ENCODE measurements at regions of chr3 and their contacts with region 1.

Region 1: GRCh38 chr3:190384241-190384863 is 3.6 kb upstream of the CLDN16 start:
- DNase-seq: peak; percentile 19
- ATAC-seq: peak; percentile 94
- H3K4me3 ChIP-seq: no peak overlapping the region
- H3K27ac ChIP-seq: no peak overlapping the region
- H3K4me1 ChIP-seq: no peaks in the 10 kb centered on the region
- H3K27me3 ChIP-seq: no peaks in the 10 kb centered on the region
- CTCF ChIP-seq: peak; percentile 49 to 68 (median 59); a peak in 5 of 6 replicates
- EP300 ChIP-seq: no peak
- POLR2A ChIP-seq: no peak
- RAD21 ChIP-seq: peak; percentile 82

Region 2: GRCh38 chr3:190205739-190206138 is 178.6 kb before region 1 on chr3:
- CTCF ChIA-PET with region 1: interaction called, 15 read pairs
- POLR2A ChIA-PET with region 1: no interaction called
- RAD21 ChIA-PET with region 1: interaction called, 7 read pairs
- SMC1A ChIA-PET with region 1: interaction called, 5 read pairs
- in situ Hi-C with region 1: no loop called
- intact Hi-C with region 1: no loop called
- DNase-seq: peak; percentile 42
- ATAC-seq: peak; percentile 81
- H3K4me3 ChIP-seq: no peak overlapping the region
- H3K27ac ChIP-seq: 0 out of 2 replicates have a peak overlapping the region, but pooled peaks have one; percentile 6
- H3K4me1 ChIP-seq: peaks cover 6% of the 10 kb centered on the region
- H3K27me3 ChIP-seq: no peaks in the 10 kb centered on the region
- CTCF ChIP-seq: no peak
- EP300 ChIP-seq: peak in 1 of 2 experiments; percentile 75; a peak in 1 of 4 replicates
- POLR2A ChIP-seq: no peak
- RAD21 ChIP-seq: no peak

Region 3: GRCh38 chr3:190339130-190339529 is 45.2 kb before region 1 on chr3:
- CTCF ChIA-PET with region 1: interaction called, 19 read pairs
- POLR2A ChIA-PET with region 1: no interaction called
- RAD21 ChIA-PET with region 1: interaction called, 13 read pairs
- SMC1A ChIA-PET with region 1: interaction called, 22 read pairs
- in situ Hi-C with region 1: no loop called
- intact Hi-C with region 1: no loop called
- DNase-seq: peak; percentile 11
- ATAC-seq: peak; percentile 95
- H3K4me3 ChIP-seq: no peak overlapping the region
- H3K27ac ChIP-seq: no peak overlapping the region
- H3K4me1 ChIP-seq: no peaks in the 10 kb centered on the region
- H3K27me3 ChIP-seq: no peaks in the 10 kb centered on the region
- CTCF ChIP-seq: peak; percentile 21 to 34 (median 28); a peak in 4 of 6 replicates
- EP300 ChIP-seq: no peak
- POLR2A ChIP-seq: no peak
- RAD21 ChIP-seq: peak; percentile 62

Region 4: GRCh38 chr3:190366145-190366544 is 18.2 kb before region 1 on chr3:
- CTCF ChIA-PET with region 1: interaction called, 20 read pairs
- POLR2A ChIA-PET with region 1: no interaction called
- RAD21 ChIA-PET with region 1: interaction called, 4 read pairs
- SMC1A ChIA-PET with region 1: interaction called, 16 read pairs
- in situ Hi-C with region 1: no loop called
- intact Hi-C with region 1: no loop called
- DNase-seq: no peak
- ATAC-seq: no peak
- H3K4me3 ChIP-seq: no peak overlapping the region
- H3K27ac ChIP-seq: no peak overlapping the region
- H3K4me1 ChIP-seq: no peaks in the 10 kb centered on the region
- H3K27me3 ChIP-seq: no peaks in the 10 kb centered on the region
- CTCF ChIP-seq: no peak
- EP300 ChIP-seq: no peak
- POLR2A ChIP-seq: no peak
- RAD21 ChIP-seq: no peak

Region 5: GRCh38 chr3:190371152-190371551 is 13.2 kb before region 1 on chr3:
- CTCF ChIA-PET with region 1: interaction called, 16 read pairs
- POLR2A ChIA-PET with region 1: no interaction called
- RAD21 ChIA-PET with region 1: interaction called, 3 read pairs
- SMC1A ChIA-PET with region 1: interaction called, 16 read pairs
- in situ Hi-C with region 1: no loop called
- intact Hi-C with region 1: no loop called
- DNase-seq: no peak
- ATAC-seq: no peak
- H3K4me3 ChIP-seq: no peak overlapping the region
- H3K27ac ChIP-seq: no peak overlapping the region
- H3K4me1 ChIP-seq: no peaks in the 10 kb centered on the region
- H3K27me3 ChIP-seq: no peaks in the 10 kb centered on the region; a peak in 1 of 4 replicates
- CTCF ChIP-seq: no peak
- EP300 ChIP-seq: no peak
- POLR2A ChIP-seq: no peak
- RAD21 ChIP-seq: no peak

Region 6: GRCh38 chr3:190443257-190443656 is 58.9 kb after region 1 on chr3:
- CTCF ChIA-PET with region 1: interaction called, 34 read pairs
- POLR2A ChIA-PET with region 1: no interaction called
- RAD21 ChIA-PET with region 1: interaction called, 10 read pairs
- SMC1A ChIA-PET with region 1: interaction called, 7 read pairs
- in situ Hi-C with region 1: no loop called
- intact Hi-C with region 1: no loop called
- DNase-seq: no peak
- ATAC-seq: no peak
- H3K4me3 ChIP-seq: no peak overlapping the region
- H3K27ac ChIP-seq: no peak overlapping the region
- H3K4me1 ChIP-seq: no peaks in the 10 kb centered on the region
- H3K27me3 ChIP-seq: no peaks in the 10 kb centered on the region
- CTCF ChIP-seq: peak in 1 of 3 experiments; percentile 6; a peak in 1 of 6 replicates
- EP300 ChIP-seq: no peak
- POLR2A ChIP-seq: no peak
- RAD21 ChIP-seq: no peak

Measured in GM12878 (cell line).